Transverse colon (tissue), 4 donors: ENCODE measurements at regions of chr1 and their contacts with region 1.

Region 1: GRCh38 chr1:21931171-21932093 is 5.7 kb downstream of the HSPG2 start:
- DNase-seq: peak; percentile 71
- H3K4me3 ChIP-seq: no peak overlapping the region
- H3K27ac ChIP-seq: peak overlapping the region; percentile 93 to 98 (median 94)
- H3K4me1 ChIP-seq: peaks cover 58 to 98% (median 85%) of the 10 kb centered on the region in 4 donors
- H3K27me3 ChIP-seq: no peaks in the 10 kb centered on the region
- CTCF ChIP-seq: no peak
- EP300 ChIP-seq: no peak
- POLR2A ChIP-seq: no peak

Region 2: DNA sequence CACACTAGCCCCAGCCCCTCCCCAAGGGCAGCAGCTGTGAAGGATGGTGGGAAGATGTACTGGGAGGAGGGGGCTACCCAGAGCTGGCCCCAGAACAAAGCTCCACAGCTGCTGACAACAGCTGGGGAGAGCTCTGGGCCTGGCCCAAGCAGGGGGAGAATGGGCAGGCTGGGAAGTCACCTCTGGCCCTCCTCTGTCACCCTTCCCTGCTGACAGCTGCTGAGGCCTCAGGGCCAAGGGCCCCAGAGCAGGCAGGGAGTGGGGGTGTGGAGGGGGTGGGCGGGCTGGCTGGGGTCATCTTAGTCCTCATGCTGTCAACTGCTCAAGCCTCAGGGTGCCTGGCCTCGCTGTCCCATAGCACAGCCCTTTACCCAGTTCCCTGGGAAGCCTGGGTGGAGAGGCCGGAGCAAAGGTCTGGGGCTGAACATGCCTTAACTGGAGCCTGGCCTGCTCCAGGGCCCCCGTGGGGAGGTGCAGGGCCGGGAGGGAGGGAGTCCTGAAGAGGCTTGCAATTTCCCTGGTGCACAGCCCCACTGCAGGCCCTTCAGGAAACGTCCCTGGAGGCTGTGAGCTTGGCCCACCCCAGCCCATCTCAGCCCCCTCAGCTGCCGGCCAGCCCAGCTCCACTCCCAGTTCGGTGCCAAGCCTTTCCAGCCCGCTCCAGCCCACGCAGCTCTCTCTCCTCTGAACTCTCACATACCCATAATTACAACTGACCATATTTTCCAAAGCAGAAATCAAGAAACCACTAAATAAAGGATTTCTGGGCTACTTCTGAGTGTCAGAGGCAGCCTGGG is 20.0 kb before region 1 on chr1:
- in situ Hi-C with region 1: no loop called
- intact Hi-C with region 1: loop called (anchors 2 kb)
- DNase-seq: no peak
- H3K4me3 ChIP-seq: no peak overlapping the region
- H3K27ac ChIP-seq: peak overlapping the region; percentile 74 to 98 (median 94)
- H3K4me1 ChIP-seq: peaks cover 59 to 99% (median 82%) of the 10 kb centered on the region in 4 donors
- H3K27me3 ChIP-seq: no peaks in the 10 kb centered on the region
- CTCF ChIP-seq: no peak
- EP300 ChIP-seq: no peak
- POLR2A ChIP-seq: no peak